ENCODE measurements at regions of chr15 and their contacts with region 1.

Region 1: GRCh38 chr15:88904624-88905327 is 8.4 kb downstream of the MFGE8 start:
- DNase-seq: peak; percentile 40 to 96 (median 89)

Region 2: DNA sequence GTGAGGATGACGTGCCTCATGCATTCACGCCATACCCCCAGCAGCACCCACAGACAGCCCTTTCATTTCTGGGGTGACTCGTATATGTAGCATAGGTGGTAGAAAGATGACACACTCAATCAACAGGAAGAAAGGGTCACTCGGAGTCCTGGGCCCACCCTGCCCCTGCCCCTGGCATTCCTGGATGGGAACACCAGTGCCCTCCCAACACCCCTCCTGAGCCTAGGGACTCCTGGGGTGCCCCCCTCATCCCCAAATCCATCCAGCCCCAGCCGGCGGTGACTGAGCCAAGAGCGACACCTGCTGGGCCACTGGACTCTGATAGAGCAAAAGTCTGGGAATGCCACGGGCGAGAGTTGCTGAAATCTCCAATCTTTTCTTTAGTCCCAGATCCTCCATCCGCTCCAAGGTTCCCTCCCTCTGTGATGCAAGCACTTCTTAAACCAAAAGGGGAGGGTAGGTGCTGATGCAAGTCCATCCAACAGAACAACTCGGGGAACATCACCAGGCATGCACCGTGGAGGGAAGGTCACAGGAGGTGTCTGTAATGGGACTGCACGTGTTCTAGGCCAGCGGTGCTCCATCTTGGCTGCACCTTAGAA is 70.5 kb before region 1 on chr15:
- intact Hi-C with region 1: no loop called
- DNase-seq: peak; percentile 46 to 84 (median 69)

Region 3: GRCh38 chr15:88844749-88845386 is 59.9 kb before region 1 on chr15:
- intact Hi-C with region 1: no loop called
- DNase-seq: no peak

Region 4: DNA sequence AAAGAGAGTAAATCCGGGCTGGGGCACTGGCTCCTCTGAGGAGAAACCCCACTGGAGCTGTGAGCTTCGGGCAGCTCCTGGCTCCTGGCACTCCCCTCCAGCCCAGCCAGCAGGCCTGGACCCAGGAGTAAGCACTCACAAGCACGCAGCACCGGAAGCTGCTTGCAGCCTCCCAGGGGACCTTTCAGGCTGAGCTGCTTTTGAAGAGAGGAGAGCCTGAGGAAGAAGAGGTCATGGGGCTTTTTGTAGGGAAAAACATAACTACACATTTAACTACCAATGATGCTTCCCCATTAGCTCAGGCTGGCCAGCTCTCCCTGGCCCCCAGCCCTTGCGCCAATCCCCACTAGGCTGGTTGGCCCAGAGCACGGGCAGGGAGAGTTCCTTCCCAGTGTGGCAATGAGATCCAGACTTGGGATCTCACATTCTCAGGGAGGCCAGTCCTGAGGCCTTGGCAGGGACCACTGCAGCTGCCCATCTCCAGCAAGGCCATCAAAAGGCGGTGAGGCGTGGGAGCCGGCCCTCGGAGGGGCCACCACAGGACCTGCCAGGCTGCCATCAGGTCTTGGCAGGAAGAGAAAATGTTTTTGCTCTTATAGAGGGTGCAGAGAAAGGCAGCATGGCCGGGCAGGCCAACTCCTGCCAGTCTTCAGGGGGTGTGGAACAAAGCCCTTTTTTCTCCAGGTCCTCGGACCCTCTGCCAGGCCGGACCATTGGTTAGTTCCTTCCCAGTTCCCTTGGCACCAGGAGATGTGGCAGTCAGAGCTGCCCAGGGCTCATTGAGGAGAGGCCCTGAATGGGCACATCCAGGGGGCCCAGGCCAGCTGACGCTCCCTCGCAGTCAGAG is 49.9 kb after region 1 on chr15:
- intact Hi-C with region 1: loop called (anchors 5 kb)
- DNase-seq: peak; percentile 6 to 85 (median 52)

Region 5: DNA sequence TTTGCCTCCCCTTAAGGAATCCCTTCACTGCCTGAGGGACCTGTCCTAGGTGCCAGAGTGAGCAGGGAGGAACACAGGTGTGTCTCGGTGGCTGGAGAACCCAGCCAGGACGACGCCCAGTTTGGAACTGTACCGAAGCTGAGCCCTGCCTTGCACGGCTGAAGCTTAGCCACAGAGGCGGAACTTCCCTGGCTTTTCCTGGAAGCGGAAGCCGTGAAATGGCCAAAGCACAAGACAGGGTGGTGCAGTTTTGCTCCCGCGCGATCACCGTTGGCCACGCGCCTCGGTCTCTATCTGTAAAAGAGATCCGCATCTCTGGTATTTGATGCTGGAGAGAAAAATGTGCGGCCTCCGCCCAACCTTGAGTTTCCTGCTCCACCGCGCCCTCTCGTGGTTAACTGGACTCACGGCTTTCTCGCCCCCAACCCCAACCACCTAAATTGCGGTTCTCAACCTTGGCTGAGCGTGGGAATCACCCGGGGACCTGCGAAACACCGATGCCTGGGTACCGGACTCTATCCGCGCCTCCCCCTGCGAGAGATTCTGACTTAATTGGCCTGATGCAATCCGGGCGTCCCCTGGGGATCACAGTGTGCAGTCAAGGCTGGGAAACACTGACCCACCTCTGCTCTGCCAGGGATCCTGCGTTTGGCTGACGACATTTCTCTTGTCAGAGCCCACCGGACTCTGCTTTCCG is 112.7 kb after region 1 on chr15:
- intact Hi-C with region 1: loop called (anchors 5 kb)
- DNase-seq: peak; percentile 52 to 92 (median 82)